PC-9 (cell line): ENCODE measurements at regions of chr3 and their contacts with region 1.

Region 1: GRCh38 chr3:90091204-90091924 is 983.9 kb downstream of the EPHA3 start:
- DNase-seq: peak in 1 of 2 experiments; percentile 17
- H3K4me3 ChIP-seq: no peak overlapping the region
- H3K27ac ChIP-seq: no peak overlapping the region
- H3K4me1 ChIP-seq: no peaks in the 10 kb centered on the region
- H3K27me3 ChIP-seq: no peaks in the 10 kb centered on the region
- CTCF ChIP-seq: peak; percentile 77

Region 2: GRCh38 chr3:88203642-88204055 is 1887.7 kb before region 1 on chr3:
- CTCF ChIA-PET with region 1: no interaction called
- POLR2A ChIA-PET with region 1: no interaction called
- intact Hi-C with region 1: loop called (anchors 1 kb)
- DNase-seq: peak in 1 of 2 experiments; percentile 59
- H3K4me3 ChIP-seq: no peak overlapping the region
- H3K27ac ChIP-seq: no peak overlapping the region
- H3K4me1 ChIP-seq: no peaks in the 10 kb centered on the region
- H3K27me3 ChIP-seq: no peaks in the 10 kb centered on the region
- CTCF ChIP-seq: peak; percentile 84

Region 3: DNA sequence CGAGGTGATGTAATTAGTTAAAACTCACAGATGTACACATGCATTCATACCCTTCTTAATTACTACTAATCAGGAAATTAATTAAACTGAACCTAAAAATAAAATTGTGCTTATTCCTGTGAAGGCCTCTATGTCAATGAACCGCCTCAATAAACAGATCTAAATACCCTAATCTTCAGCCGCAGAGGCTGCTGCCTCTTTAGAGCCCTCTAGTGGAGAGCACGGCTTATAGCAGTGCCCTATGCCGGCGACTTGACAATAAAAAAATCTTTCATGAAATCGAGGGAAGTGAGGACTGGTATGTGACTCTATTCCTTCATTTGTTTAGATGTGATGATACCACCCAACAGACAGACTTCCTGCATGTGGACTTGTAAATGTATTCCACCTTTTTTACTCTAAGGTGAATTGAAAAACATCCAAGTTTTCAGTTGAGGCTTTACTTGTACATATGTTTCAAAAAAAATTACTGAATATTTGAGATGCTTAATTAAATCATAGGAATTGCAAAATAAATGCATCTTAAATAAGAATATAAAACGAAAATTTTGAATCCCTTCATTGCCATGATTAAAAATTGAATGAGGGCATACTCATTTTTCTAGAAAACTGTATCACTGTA is 992.3 kb before region 1 on chr3:
- CTCF ChIA-PET with region 1: no interaction called
- POLR2A ChIA-PET with region 1: no interaction called
- intact Hi-C with region 1: loop called (anchors 10 kb)
- DNase-seq: peak; percentile 35 to 40
- H3K4me3 ChIP-seq: no peak overlapping the region
- H3K27ac ChIP-seq: no peak overlapping the region
- H3K4me1 ChIP-seq: no peaks in the 10 kb centered on the region
- H3K27me3 ChIP-seq: no peaks in the 10 kb centered on the region
- CTCF ChIP-seq: peak; percentile 90

Region 4: DNA sequence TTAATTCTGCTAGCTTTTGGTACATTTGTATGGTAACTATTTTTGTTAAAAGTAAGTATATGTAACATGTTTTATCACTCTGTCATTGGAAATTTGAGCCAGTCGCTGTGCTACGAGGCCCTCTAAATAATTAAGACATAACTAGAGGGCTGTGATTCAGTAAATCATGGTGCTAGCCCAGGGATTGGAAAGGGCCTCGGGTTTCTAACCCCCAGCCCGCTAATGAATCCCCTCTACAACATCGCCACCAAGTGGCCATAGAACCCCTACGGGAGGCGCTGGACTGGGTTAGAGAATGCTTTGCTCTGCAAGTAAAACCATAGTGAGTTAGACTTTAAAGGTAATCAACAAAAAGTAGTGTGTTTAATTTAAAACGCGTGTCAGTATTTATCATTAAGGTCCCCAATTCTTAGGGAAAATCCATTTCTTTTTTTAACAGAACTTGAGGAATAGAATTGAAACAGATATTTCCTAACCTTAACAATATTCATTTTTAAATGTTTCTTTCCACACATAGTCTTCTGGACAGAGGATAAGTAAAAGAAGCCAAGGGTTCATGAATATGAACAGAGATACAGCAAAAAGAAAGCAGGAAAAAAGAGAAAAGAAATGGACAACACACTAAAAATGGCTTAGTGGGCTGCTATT is 239.3 kb before region 1 on chr3:
- CTCF ChIA-PET with region 1: no interaction called
- POLR2A ChIA-PET with region 1: no interaction called
- intact Hi-C with region 1: loop called (anchors 1 kb)
- DNase-seq: peak in 1 of 2 experiments; percentile 25
- H3K4me3 ChIP-seq: no peak overlapping the region
- H3K27ac ChIP-seq: no peak overlapping the region
- H3K4me1 ChIP-seq: no peaks in the 10 kb centered on the region
- H3K27me3 ChIP-seq: no peaks in the 10 kb centered on the region
- CTCF ChIP-seq: peak; percentile 69

Region 5: GRCh38 chr3:90010341-90010740 is 81.0 kb before region 1 on chr3:
- CTCF ChIA-PET with region 1: no interaction called
- POLR2A ChIA-PET with region 1: no interaction called
- intact Hi-C with region 1: loop called (anchors 1 kb)
- DNase-seq: peak; percentile 4 to 65
- H3K4me3 ChIP-seq: no peak overlapping the region
- H3K27ac ChIP-seq: no peak overlapping the region
- H3K4me1 ChIP-seq: peaks cover 21% of the 10 kb centered on the region
- H3K27me3 ChIP-seq: no peaks in the 10 kb centered on the region
- CTCF ChIP-seq: no peak